Activated B cell treated with CpG ODN at 0.5 μM for 24 hours (primary cell): ENCODE measurements at regions of chr2 and their contacts with region 1.

Region 1: GRCh38 chr2:130797493-130798435 is 39.0 kb upstream of the ARHGEF4 start:
- DNase-seq: peak; percentile 91
- ATAC-seq: peak; percentile 93
- H3K4me3 Mint-ChIP-seq: peak overlapping the region; percentile 77
- H3K27ac Mint-ChIP-seq: no peak overlapping the region
- H3K4me1 Mint-ChIP-seq: peaks cover 7% of the 10 kb centered on the region
- H3K27me3 Mint-ChIP-seq: peaks cover 3% of the 10 kb centered on the region
- CTCF ChIP-seq: no peak

Region 2: DNA sequence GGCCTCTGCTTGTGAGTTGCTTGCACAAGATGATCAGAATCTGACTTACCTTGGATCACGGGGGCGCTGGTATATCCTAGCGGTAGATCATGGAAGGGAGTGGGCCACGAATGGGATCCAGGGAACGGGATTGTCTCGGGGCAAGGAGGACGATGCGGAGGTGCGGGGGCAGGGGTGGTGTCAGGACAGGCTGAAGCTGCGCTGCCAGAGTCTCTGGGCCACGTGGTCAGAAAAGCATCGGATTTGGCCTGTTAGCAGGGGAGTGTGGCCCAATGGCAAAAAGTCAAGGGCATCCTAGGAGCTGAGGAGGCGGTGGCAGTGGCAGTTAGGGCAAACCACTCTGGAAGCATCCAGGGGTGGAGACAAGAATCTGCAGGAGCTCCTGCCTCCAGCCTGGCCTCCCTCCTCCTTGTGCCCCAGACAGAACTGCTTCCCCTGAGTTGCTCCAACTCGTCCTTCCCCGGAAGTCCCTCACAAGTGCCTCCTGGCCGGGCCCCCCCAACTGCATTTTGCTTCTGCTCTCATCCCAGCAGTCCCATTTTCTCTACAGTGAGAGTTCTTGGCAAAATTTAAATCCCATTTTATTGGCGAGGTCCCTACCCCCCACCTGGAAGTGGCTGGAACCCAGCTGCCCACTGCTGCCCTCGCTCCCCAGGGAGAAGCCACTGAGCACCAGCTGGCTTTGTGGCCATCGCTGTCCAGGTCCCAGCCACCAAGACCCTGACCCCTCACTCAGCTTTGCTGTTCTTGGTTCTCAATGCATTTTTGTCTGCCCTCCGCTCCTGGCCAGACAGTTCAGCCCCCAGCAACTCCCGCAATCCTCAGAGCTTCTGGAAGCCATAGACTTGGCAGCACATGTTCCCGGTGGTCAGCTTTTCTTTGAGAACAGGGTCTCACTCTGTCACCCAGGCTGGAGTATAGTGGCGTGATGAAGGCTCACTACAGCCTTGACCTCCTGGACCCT is 647.3 kb before region 1 on chr2:
- CTCF ChIA-PET with region 1: no interaction called
- POLR2A ChIA-PET with region 1: no interaction called
- intact Hi-C with region 1: loop called (anchors 10 kb)
- DNase-seq: no peak
- ATAC-seq: no peak
- H3K4me3 Mint-ChIP-seq: no peak overlapping the region
- H3K27ac Mint-ChIP-seq: no peak overlapping the region
- H3K4me1 Mint-ChIP-seq: no peaks in the 10 kb centered on the region
- H3K27me3 Mint-ChIP-seq: peaks cover 5% of the 10 kb centered on the region
- CTCF ChIP-seq: no peak

Region 3: GRCh38 chr2:130756053-130756873 is 41.5 kb before region 1 on chr2:
- CTCF ChIA-PET with region 1: no interaction called
- POLR2A ChIA-PET with region 1: no interaction called
- intact Hi-C with region 1: no loop called
- DNase-seq: no peak
- ATAC-seq: peak; percentile 56
- H3K4me3 Mint-ChIP-seq: no peak overlapping the region
- H3K27ac Mint-ChIP-seq: no peak overlapping the region
- H3K4me1 Mint-ChIP-seq: peaks cover 7% of the 10 kb centered on the region
- H3K27me3 Mint-ChIP-seq: peaks cover 46% of the 10 kb centered on the region
- CTCF ChIP-seq: no peak

Region 4: GRCh38 chr2:130824492-130825061 is 26.8 kb after region 1 on chr2:
- CTCF ChIA-PET with region 1: interaction called, 10 read pairs
- POLR2A ChIA-PET with region 1: interaction called, 12 read pairs
- intact Hi-C with region 1: loop called (anchors 1 kb)
- DNase-seq: no peak
- ATAC-seq: peak; percentile 90
- H3K4me3 Mint-ChIP-seq: peak overlapping the region; percentile 55
- H3K27ac Mint-ChIP-seq: peak overlapping the region; percentile 86
- H3K4me1 Mint-ChIP-seq: peaks cover 23% of the 10 kb centered on the region
- H3K27me3 Mint-ChIP-seq: no peaks in the 10 kb centered on the region
- CTCF ChIP-seq: no peak

Region 5: GRCh38 chr2:130920415-130921163 is 122.8 kb after region 1 on chr2:
- CTCF ChIA-PET with region 1: interaction called, 33 read pairs
- POLR2A ChIA-PET with region 1: interaction called, 3 read pairs
- intact Hi-C with region 1: loop called (anchors 1 kb)
- DNase-seq: peak; percentile 37
- ATAC-seq: no peak
- H3K4me3 Mint-ChIP-seq: no peak overlapping the region
- H3K27ac Mint-ChIP-seq: no peak overlapping the region
- H3K4me1 Mint-ChIP-seq: no peaks in the 10 kb centered on the region
- H3K27me3 Mint-ChIP-seq: peaks cover 12% of the 10 kb centered on the region
- CTCF ChIP-seq: peak; percentile 49

Region 6: GRCh38 chr2:131093006-131093695 is 295.4 kb after region 1 on chr2 and contains the start of gene FAM168B:
- CTCF ChIA-PET with region 1: no interaction called
- POLR2A ChIA-PET with region 1: interaction called, 7 read pairs
- intact Hi-C with region 1: loop called (anchors 2 kb)
- DNase-seq: peak; percentile 96
- ATAC-seq: peak; percentile 78
- H3K4me3 Mint-ChIP-seq: peak within 1 kb of the TSS; percentile 97
- H3K27ac Mint-ChIP-seq: peak within 1 kb of the TSS; percentile 98
- H3K4me1 Mint-ChIP-seq: peaks cover 22% of the 10 kb centered on the region
- H3K27me3 Mint-ChIP-seq: no peaks in the 10 kb centered on the region
- CTCF ChIP-seq: no peak
- total RNA-seq, gene FAM168B: 59.9 and 62.5 TPM in 2 replicates

Region 7: GRCh38 chr2:131492418-131493198 is 694.8 kb after region 1 on chr2:
- CTCF ChIA-PET with region 1: no interaction called
- POLR2A ChIA-PET with region 1: interaction called, 3 read pairs
- intact Hi-C with region 1: loop called (anchors 2 kb)
- DNase-seq: peak; percentile 97
- ATAC-seq: peak; percentile 86
- H3K4me3 Mint-ChIP-seq: peak overlapping the region; percentile 97
- H3K27ac Mint-ChIP-seq: peak overlapping the region; percentile 83
- H3K4me1 Mint-ChIP-seq: peaks cover 38% of the 10 kb centered on the region
- H3K27me3 Mint-ChIP-seq: no peaks in the 10 kb centered on the region
- CTCF ChIP-seq: peak; percentile 39